ENCODE measurements at regions of chr16 and their contacts with region 1.

Region 1: GRCh38 chr16:69186642-69187445 is at the start of gene SNTB2:
- DNase-seq: peak; percentile 70 to 95
- H3K4me3 ChIP-seq: peak within 1 kb of the TSS; percentile 85 to 96 (median 91)
- H3K27ac ChIP-seq: peak within 1 kb of the TSS; percentile 59; the same call in 1 of the 2 replicates
- H3K4me1 ChIP-seq: peaks cover 2 to 7% (median 5%) of the 10 kb centered on the region in 4 experiments; a peak in 4 of 7 replicates
- H3K27me3 ChIP-seq: no peaks in the 10 kb centered on the region
- CTCF ChIP-seq: no peak
- EP300 ChIP-seq: no peak; a peak in 1 of 3 replicates
- POLR2A ChIP-seq: peak; percentile 93
- RAD21 ChIP-seq: no peak
- total RNA-seq, gene SNTB2: 16.1 and 19.6 TPM in 2 replicates

Region 2: DNA sequence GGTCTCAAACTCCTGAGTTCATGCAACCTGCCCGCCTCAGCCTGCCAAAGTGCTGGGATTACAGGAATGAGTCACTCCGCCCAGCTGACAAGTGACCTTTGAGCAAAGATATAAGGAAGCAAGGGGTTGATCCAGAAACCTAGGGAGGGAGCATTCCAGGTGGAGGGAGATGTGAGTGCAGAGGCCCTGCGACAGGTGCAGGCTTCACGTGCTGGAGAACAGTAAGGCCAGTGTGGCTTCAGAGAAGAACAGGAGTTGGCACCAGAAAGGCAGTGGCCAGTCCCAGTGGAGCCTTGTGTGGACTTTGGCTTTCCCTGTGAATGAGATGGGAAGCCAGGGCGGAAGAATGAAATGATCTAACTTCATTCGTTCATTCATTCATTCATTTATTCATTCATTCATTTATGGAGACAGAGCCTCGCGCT is 155.0 kb before region 1 on chr16:
- CTCF ChIA-PET with region 1: no interaction called
- POLR2A ChIA-PET with region 1: no interaction called
- DNase-seq: no peak
- H3K4me3 ChIP-seq: no peak overlapping the region
- H3K27ac ChIP-seq: no peak overlapping the region
- H3K4me1 ChIP-seq: no peaks in the 10 kb centered on the region
- H3K27me3 ChIP-seq: no peaks in the 10 kb centered on the region
- CTCF ChIP-seq: no peak
- EP300 ChIP-seq: no peak
- POLR2A ChIP-seq: no peak
- RAD21 ChIP-seq: no peak

Region 3: DNA sequence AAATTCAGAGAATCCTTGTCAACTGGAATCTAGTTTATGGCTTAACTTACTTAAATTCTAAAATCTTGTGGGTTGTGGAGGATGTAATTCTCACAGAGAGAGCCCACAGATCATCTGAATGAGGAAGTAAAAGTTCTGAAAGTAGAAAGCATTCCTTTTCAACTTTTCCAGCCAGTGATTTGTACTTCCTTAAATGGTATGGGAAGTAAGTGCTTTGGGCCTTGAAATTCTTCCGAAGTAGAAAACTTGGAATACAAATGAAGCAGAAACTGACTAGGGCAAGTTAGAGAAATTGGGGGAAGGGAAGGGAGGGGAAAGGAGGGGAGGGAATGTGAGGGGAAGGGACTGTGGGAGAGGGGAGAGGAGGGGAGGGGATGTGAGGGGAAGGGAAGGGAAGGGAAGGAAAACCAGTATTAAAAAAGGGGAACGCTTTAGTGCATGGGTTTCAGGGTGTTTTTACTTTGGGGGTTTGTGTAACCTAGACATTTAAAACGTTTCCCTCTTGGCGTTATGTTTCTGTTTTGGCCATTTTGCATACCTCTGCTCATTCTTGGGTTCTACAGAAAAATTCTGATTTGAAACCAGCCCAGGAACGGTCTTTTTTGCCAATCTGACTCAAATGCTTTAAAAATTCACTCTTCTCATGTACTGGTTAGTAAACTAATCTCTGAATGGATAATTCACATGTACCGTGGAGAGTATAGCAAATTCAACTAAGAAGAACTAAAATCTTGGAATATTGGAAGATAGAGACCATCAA is 15.3 kb before region 1 on chr16:
- CTCF ChIA-PET with region 1: no interaction called
- POLR2A ChIA-PET with region 1: interaction called, 12 read pairs
- DNase-seq: no peak
- H3K4me3 ChIP-seq: no peak overlapping the region
- H3K27ac ChIP-seq: no peak overlapping the region
- H3K4me1 ChIP-seq: no peaks in the 10 kb centered on the region
- H3K27me3 ChIP-seq: no peaks in the 10 kb centered on the region
- CTCF ChIP-seq: no peak
- EP300 ChIP-seq: no peak
- POLR2A ChIP-seq: no peak
- RAD21 ChIP-seq: no peak

Region 4: GRCh38 chr16:69404275-69404805 is 217.5 kb after region 1 on chr16:
- CTCF ChIA-PET with region 1: no interaction called
- POLR2A ChIA-PET with region 1: no interaction called
- DNase-seq: no peak
- H3K4me3 ChIP-seq: no peak overlapping the region
- H3K27ac ChIP-seq: no peak overlapping the region
- H3K4me1 ChIP-seq: peaks cover 0 to 4% (median 1%) of the 10 kb centered on the region in 4 experiments; a peak in 2 of 7 replicates
- H3K27me3 ChIP-seq: no peaks in the 10 kb centered on the region
- CTCF ChIP-seq: no peak
- EP300 ChIP-seq: no peak
- POLR2A ChIP-seq: no peak
- RAD21 ChIP-seq: no peak